K562 (cell line): ENCODE measurements at regions of chr2 and their contacts with region 1.

Region 1: DNA sequence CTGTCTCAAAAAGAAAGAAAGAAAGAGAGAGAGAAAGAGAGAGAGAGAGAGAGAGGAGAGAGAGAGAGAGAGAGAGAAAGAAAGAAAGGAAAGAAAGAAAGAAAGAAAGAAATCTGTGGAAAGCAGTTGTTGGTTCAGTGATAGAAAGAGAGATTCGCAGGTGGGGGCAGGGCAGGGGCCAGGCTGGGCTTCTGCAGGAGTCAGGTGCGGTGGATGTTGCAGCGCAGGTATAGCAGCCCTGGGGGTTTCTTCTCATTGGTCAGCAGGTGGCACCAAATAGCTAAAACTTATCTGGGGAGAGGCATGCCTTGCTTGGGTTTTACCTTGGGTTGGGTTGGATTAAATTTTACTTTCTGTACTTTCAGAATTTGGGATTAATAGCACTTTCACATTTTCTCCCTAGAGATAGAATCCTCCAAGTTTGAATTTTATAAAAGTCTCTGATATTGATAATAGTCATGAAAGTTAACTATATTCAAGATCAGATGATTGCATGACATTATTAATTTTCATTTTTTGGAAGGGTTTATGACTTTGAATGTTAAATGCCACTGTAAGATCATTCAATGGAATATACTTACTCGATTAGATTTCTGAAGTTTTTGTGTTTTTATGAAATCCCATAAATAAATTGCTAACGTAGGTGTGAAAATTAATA is 66.6 kb downstream of the SPTBN1 start:
- DNase-seq: peak; percentile 72 to 81 (median 78)
- ATAC-seq: peak; percentile 97
- H3K4me3 ChIP-seq: no peak overlapping the region
- H3K27ac ChIP-seq: no peak overlapping the region
- H3K4me1 ChIP-seq: 0 out of 5 replicates have a peak, but pooled peaks cover 0 to 6% of the 10 kb centered on the region in 2 experiments
- H3K27me3 ChIP-seq: peaks cover 17 to 26% of the 10 kb centered on the region in 2 experiments; a peak in 3 of 5 replicates
- CTCF ChIP-seq: peak; percentile 67 to 82 (median 75)
- EP300 ChIP-seq: no peak
- POLR2A ChIP-seq: no peak
- RAD21 ChIP-seq: peak; percentile 88 to 93

Region 2: GRCh38 chr2:54599914-54600313 is 77.2 kb after region 1 on chr2:
- CTCF ChIA-PET with region 1: no interaction called
- POLR2A ChIA-PET with region 1: no interaction called
- in situ Hi-C with region 1: no loop called
- intact Hi-C with region 1: loop called (anchors 5 kb)
- DNase-seq: peak; percentile 75 to 90 (median 80)
- ATAC-seq: peak; percentile 77
- H3K4me3 ChIP-seq: no peak overlapping the region
- H3K27ac ChIP-seq: peak overlapping the region; percentile 62
- H3K4me1 ChIP-seq: peaks cover 39 to 87% of the 10 kb centered on the region in 2 experiments
- H3K27me3 ChIP-seq: no peaks in the 10 kb centered on the region
- CTCF ChIP-seq: no peak
- EP300 ChIP-seq: peak; percentile 63; the same call in 1 of the 2 replicates
- POLR2A ChIP-seq: no peak
- RAD21 ChIP-seq: no peak

Region 3: GRCh38 chr2:54665436-54665856 is 142.7 kb after region 1 on chr2:
- CTCF ChIA-PET with region 1: no interaction called
- POLR2A ChIA-PET with region 1: no interaction called
- in situ Hi-C with region 1: no loop called
- intact Hi-C with region 1: loop called (anchors 2 kb)
- DNase-seq: peak; percentile 31 to 76 (median 41)
- ATAC-seq: peak; percentile 93
- H3K4me3 ChIP-seq: no peak overlapping the region
- H3K27ac ChIP-seq: no peak overlapping the region
- H3K4me1 ChIP-seq: peaks cover 0 to 2% of the 10 kb centered on the region in 2 experiments; a peak in 1 of 5 replicates
- H3K27me3 ChIP-seq: no peaks in the 10 kb centered on the region
- CTCF ChIP-seq: peak; percentile 61 to 75 (median 75); a peak in 5 of 6 replicates
- EP300 ChIP-seq: no peak
- POLR2A ChIP-seq: no peak
- RAD21 ChIP-seq: peak; percentile 41 to 62

Region 4: DNA sequence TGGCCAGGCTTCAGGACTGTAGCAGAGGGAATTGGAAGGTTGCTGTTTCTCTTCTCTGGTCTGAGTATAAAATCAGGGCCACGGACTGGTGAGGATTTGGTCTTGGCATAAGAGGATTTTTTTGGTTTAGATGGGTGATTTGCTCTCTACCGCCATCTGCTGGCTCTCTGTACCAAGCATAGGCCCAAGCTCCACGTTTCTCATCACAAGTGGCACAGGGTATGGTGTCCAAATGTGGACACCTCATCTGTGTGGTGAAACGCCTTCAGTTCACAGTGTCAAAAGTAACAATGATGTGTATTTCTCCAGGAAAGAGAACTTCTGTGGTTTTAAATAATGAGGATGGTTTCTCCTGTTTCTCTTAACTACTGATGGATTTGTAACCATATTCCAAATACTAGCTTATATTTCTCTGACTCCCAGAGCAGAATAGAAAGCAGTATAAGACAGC is 315.9 kb after region 1 on chr2:
- CTCF ChIA-PET with region 1: interaction called, 3 read pairs
- POLR2A ChIA-PET with region 1: no interaction called
- in situ Hi-C with region 1: loop called (anchors 10 kb)
- intact Hi-C with region 1: loop called (anchors 5 kb)
- DNase-seq: peak; percentile 57 to 67 (median 64)
- ATAC-seq: peak; percentile 93
- H3K4me3 ChIP-seq: no peak overlapping the region
- H3K27ac ChIP-seq: no peak overlapping the region
- H3K4me1 ChIP-seq: no peaks in the 10 kb centered on the region
- H3K27me3 ChIP-seq: peaks cover 21 to 43% of the 10 kb centered on the region in 2 experiments
- CTCF ChIP-seq: peak; percentile 63 to 81 (median 78)
- EP300 ChIP-seq: no peak
- POLR2A ChIP-seq: no peak
- RAD21 ChIP-seq: peak; percentile 65 to 77

Region 5: DNA sequence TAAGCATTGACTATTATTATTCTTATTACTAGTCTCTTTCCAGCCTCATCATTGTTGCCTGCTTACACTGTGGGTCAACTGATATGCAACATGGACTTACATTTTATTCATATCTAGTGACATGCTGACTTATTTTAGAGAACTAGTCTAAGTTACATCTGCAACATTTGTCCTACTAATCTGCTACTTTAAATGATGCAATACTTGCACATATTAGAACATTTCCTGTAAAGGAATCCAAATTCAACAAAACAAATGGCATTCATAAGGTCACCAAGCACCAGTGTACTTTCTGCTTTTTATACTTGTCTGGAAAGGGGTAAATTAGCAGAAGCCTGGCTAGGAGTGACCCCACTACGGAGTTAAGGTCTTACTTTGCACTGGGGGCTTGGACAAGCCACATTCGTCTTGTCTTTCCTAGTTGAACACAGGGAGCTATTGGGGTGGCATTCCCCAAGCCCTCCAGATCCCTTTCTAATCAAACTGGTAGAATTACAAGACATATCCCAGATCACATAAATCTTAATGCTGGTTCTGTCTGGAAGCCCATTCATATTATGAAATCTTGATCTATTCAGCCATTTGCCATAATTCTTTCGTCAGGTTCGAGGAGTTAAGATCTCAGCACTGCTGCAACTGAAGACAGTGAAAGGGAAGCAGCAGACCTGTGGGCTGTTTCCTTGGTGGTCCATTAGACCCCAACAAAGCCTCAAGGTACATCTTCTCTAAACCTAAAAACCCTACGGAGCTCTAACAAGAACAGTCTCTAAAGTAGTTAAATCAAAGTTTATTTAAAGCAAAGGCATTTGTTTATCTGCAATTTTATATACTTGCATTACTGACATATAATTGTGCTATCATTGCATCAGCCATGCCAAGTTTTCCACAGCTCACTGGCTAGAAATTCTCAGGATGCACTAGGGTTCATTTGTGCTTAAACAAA is 577.4 kb after region 1 on chr2:
- CTCF ChIA-PET with region 1: no interaction called
- POLR2A ChIA-PET with region 1: no interaction called
- in situ Hi-C with region 1: no loop called
- intact Hi-C with region 1: no loop called
- DNase-seq: no peak
- ATAC-seq: peak; percentile 57
- H3K4me3 ChIP-seq: no peak overlapping the region
- H3K27ac ChIP-seq: peak overlapping the region; percentile 58
- H3K4me1 ChIP-seq: peaks cover 4 to 39% of the 10 kb centered on the region in 2 experiments; a peak in 4 of 5 replicates
- H3K27me3 ChIP-seq: no peaks in the 10 kb centered on the region
- CTCF ChIP-seq: no peak
- EP300 ChIP-seq: peak; percentile 59
- POLR2A ChIP-seq: no peak
- RAD21 ChIP-seq: peak in 1 of 2 experiments; percentile 33; a peak in 2 of 4 replicates

Region 6: DNA sequence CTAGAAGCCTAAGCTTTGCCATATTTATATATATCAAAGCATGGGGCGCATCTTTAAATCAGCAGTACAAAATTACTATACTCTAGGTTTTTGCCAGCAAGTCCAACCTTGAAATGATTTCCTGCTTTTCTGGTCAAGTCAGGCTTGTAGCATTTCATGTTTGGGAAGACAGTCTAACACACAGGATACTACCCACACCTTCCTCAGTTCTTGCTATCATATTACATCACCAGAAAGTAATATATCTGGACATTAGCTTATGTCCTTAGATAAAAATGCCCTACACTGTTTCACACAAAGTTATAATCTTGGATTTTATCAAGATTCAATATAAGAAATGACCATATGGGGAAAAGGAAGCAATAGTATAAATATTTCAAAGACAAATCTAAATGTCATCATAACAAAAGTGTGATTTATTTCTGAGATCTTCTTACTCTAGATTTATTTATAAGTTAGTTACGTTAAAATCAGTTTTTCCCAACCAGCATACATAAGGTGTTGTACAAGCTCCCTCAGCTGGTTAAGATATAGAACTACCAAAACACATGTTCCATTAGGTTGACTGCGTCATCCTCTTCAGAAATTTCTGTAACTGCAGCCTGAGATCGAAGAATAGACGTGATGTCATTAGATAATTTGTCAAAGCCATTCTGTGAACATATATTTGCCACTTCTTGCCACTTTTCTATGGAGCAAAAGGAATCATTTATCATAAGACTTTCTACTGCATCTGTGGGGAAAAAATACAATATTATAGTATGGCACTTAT is 652.7 kb after region 1 on chr2:
- CTCF ChIA-PET with region 1: interaction called, 5 read pairs
- POLR2A ChIA-PET with region 1: no interaction called
- in situ Hi-C with region 1: no loop called
- intact Hi-C with region 1: loop called (anchors 5 kb)
- DNase-seq: peak; percentile 65 to 67 (median 66)
- ATAC-seq: peak; percentile 93
- H3K4me3 ChIP-seq: no peak overlapping the region
- H3K27ac ChIP-seq: no peak overlapping the region
- H3K4me1 ChIP-seq: no peaks in the 10 kb centered on the region; a peak in 1 of 5 replicates
- H3K27me3 ChIP-seq: no peaks in the 10 kb centered on the region
- CTCF ChIP-seq: peak; percentile 58 to 83 (median 59); a peak in 5 of 6 replicates
- EP300 ChIP-seq: 0 out of 2 replicates have a peak, but pooled peaks have one; percentile 19
- POLR2A ChIP-seq: no peak
- RAD21 ChIP-seq: peak; percentile 91 to 94